ENCODE measurements at regions of chr3 and their contacts with region 1.

Region 1: DNA sequence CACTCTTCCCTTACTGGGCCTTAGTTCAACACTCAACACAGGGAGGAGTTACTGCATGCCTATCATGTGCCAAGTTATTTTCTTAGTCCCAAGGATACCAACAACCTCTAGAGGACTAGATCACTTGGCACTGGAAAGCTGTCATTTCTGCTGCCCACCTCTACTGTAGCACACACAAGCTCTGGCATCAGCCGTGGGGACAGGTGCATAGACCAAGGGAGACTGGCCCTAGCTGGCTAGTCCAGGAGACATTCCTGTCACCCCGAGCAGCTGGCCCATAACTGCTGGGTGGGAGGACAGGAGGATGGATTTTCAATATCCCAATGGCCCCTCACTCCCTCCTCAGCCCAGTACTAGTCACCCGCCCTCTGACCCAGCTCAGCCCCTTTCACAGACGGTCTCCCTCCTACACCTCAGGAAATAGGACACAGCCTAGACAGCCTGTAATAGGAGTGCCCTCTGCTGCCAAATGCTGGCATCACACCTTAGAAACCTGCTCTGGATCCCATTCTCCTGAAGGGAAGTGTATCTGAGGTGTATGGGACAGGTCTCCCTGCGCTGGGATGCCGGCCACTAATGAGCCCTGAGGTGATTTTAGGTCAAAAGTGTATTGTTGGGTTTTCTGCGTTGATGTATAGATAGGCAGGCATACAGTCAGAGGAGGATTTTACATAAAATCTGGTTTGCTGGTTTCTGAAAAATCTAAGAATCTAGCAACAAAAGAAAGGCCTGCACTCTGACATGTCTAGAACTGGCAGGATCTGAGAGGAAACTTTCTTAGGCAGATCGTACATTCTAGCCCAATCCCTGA is 3.4 kb upstream of the DZIP1L start:
- DNase-seq: no peak
- H3K4me3 ChIP-seq: no peak overlapping the region
- H3K27ac ChIP-seq: no peak overlapping the region
- H3K4me1 ChIP-seq: peaks cover 9 to 31% (median 24%) of the 10 kb centered on the region in 4 donors
- H3K27me3 ChIP-seq: no peaks in the 10 kb centered on the region
- CTCF ChIP-seq: peak; percentile 61 to 91 (median 78)
- EP300 ChIP-seq: no peak
- POLR2A ChIP-seq: no peak

Region 2: GRCh38 chr3:138068579-138069174 is 50.1 kb before region 1 on chr3:
- intact Hi-C with region 1: loop called (anchors 2 kb)
- DNase-seq: no peak
- H3K4me3 ChIP-seq: no peak overlapping the region
- H3K27ac ChIP-seq: no peak overlapping the region
- H3K4me1 ChIP-seq: no peaks in the 10 kb centered on the region
- H3K27me3 ChIP-seq: no peaks in the 10 kb centered on the region
- CTCF ChIP-seq: peak in 2 of 3 experiments; percentile 92 to 95
- EP300 ChIP-seq: no peak
- POLR2A ChIP-seq: no peak